Calu3 (cell line): ENCODE measurements at regions of chr16 and their contacts with region 1.

Region 1: GRCh38 chr16:24036614-24037013 is 200.8 kb downstream of the PRKCB start:
- DNase-seq: peak; percentile 62
- H3K4me3 Mint-ChIP-seq: no peak overlapping the region
- H3K27ac Mint-ChIP-seq: no peak overlapping the region
- H3K4me1 Mint-ChIP-seq: no peaks in the 10 kb centered on the region
- H3K27me3 Mint-ChIP-seq: peaks cover 88% of the 10 kb centered on the region
- CTCF ChIP-seq: peak; percentile 71

Region 2: DNA sequence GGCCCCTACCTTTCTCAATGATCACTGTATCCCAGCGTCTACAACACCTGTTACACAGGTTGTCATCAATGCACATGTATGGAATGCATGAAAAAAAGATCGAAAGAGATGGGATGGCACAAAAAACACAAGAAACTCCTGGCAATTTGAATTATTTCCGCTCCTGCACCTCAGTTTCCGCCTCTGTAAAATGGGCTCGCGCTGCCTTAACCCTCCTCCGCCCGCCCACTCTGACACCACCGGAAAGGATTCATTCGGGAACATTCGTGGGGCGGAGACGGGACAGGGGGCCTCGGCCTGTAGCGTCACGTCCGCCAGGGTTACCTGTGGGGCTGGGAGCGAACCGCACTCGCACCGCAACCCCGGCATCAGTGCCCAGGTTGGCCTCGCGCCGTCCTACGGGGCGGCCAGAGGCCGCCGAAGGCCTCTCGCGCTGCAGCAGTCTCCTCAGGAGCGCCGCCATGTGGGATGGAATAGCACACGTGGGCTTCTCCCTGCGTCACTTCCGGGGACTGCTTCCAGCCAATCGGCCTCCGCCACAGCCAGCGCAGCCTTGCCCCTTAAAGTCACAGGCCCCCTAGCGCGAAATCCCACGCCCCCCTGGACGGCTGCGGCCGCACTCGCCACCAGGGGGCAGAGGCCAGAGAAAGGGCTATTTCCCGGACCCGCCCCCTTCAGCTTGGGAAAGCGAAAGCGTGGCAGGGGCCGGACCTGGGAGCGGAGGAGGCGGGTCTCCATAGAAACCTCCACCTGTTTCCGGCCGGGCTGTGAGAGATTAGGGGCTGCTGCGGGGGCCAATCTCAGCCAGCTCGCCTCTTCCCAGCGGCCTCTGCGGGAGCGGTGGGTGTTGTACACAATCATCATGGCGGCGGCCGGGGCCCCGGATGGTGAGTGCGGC is 479.5 kb before region 1 on chr16 and contains the starts of genes EARS2 and UBFD1:
- CTCF ChIA-PET with region 1: no interaction called
- intact Hi-C with region 1: loop called (anchors 5 kb)
- DNase-seq: peak; percentile 100
- H3K4me3 Mint-ChIP-seq: peak within 1 kb of the TSS; percentile 96
- H3K27ac Mint-ChIP-seq: peak within 1 kb of the TSS; percentile 96
- H3K4me1 Mint-ChIP-seq: peaks cover 8% of the 10 kb centered on the region
- H3K27me3 Mint-ChIP-seq: no peaks in the 10 kb centered on the region
- CTCF ChIP-seq: peak; percentile 91
- total RNA-seq, gene EARS2: 45.9 and 46.9 TPM in 2 replicates
- total RNA-seq, gene UBFD1: 121 and 125 TPM in 2 replicates

Region 3: GRCh38 chr16:23734176-23734893 is 302.3 kb before region 1 on chr16:
- CTCF ChIA-PET with region 1: no interaction called
- intact Hi-C with region 1: loop called (anchors 1 kb)
- DNase-seq: no peak
- H3K4me3 Mint-ChIP-seq: no peak overlapping the region
- H3K27ac Mint-ChIP-seq: no peak overlapping the region
- H3K4me1 Mint-ChIP-seq: peaks cover 8% of the 10 kb centered on the region
- H3K27me3 Mint-ChIP-seq: peaks cover 28% of the 10 kb centered on the region
- CTCF ChIP-seq: no peak